Activated CD4-positive, alpha-beta T cell treated with anti-CD3 and anti-CD28 coated beads for 36 hours (primary cell): ENCODE measurements at regions of chr10 and their contacts with region 1.

Region 1: GRCh38 chr10:77259171-77259874 is 378.3 kb downstream of the KCNMA1 start:
- DNase-seq: no peak
- ATAC-seq: no peak
- H3K4me3 Mint-ChIP-seq: no peak overlapping the region
- H3K27ac Mint-ChIP-seq: no peak overlapping the region
- H3K4me1 Mint-ChIP-seq: peaks cover 7% of the 10 kb centered on the region
- H3K27me3 Mint-ChIP-seq: no peaks in the 10 kb centered on the region

Region 2: GRCh38 chr10:76697923-76698322 is 561.4 kb before region 1 on chr10:
- CTCF ChIA-PET with region 1: no interaction called
- POLR2A ChIA-PET with region 1: no interaction called
- intact Hi-C with region 1: no loop called
- DNase-seq: no peak
- ATAC-seq: no peak
- H3K4me3 Mint-ChIP-seq: no peak overlapping the region
- H3K27ac Mint-ChIP-seq: no peak overlapping the region
- H3K4me1 Mint-ChIP-seq: no peaks in the 10 kb centered on the region
- H3K27me3 Mint-ChIP-seq: no peaks in the 10 kb centered on the region

Region 3: DNA sequence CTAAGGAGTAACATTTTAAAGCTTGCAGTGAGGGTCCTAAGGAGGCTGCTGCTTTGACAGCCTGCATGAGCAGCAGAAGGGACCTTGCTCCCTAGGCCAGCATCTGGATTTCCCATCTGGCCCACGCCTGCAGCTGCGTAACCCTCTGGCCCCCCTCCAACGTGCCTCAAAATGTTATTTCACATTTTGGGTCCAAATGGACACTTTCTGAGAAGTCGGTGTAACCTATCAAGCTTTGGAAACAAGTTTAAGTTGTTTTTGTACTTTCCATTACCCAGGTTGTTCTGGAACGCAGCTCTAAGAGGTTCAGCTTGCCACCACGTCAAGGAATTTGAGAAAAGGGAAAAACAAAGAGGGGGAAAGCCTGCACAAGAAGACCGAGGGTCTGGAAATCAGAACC is 40.0 kb after region 1 on chr10:
- CTCF ChIA-PET with region 1: no interaction called
- POLR2A ChIA-PET with region 1: interaction called, 10 read pairs
- intact Hi-C with region 1: no loop called
- DNase-seq: no peak
- ATAC-seq: no peak
- H3K4me3 Mint-ChIP-seq: no peak overlapping the region
- H3K27ac Mint-ChIP-seq: no peak overlapping the region
- H3K4me1 Mint-ChIP-seq: no peaks in the 10 kb centered on the region
- H3K27me3 Mint-ChIP-seq: peaks cover 8% of the 10 kb centered on the region